ENCODE measurements at regions of chr2 and their contacts with region 1.

Region 1: DNA sequence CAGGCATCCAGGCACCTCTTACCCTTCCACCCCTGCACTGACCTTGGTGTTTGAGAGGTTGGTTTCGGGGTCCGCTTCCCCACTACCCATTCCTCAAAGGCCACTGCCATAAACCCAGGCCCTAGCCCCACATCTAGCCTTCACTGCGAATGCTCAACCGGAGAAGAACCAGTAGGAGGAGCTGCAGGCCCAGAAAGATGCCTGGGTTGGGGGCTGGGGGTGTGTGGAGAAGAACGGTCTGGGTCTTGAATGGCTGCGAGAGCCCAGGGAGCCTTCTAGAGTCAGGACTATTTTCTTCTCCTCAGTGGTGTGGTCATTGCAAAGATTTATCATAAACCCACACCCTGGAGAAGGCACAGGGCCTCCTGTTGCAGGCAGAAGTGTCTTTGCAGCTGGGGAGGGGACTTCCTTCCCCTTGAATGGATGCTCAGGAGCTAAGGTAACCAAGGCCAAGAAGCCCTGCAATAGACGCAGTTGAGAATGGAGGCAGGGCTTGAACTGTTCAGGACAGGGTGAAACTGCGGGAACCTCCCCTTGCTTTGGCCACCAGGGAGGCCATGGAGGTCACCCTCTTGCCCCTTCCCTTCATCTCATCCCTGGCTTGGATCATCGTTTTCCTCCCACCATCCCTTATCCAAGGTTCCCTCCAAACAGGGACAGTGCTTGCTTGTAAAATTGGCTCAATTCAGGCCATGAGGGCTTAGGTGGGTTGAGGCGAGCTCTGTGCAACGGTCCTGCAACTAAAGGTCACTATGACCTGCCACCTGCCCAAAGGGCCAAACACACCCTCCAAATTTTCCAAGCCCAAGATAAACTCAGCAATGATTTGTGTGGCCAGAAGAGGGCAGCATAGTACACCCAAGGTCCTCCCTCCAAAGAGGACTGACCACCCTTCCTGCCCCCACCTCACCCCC is 20.9 kb downstream of the THNSL2 start:
- DNase-seq: peak; percentile 71
- H3K4me3 Mint-ChIP-seq: no peak overlapping the region
- H3K27ac Mint-ChIP-seq: no peak overlapping the region
- H3K4me1 Mint-ChIP-seq: peaks cover 22% of the 10 kb centered on the region
- H3K27me3 Mint-ChIP-seq: peaks cover 5% of the 10 kb centered on the region

Region 2: GRCh38 chr2:88170472-88170892 is 20.6 kb before region 1 on chr2:
- intact Hi-C with region 1: no loop called
- DNase-seq: peak; percentile 53
- H3K4me3 Mint-ChIP-seq: peak overlapping the region; percentile 69
- H3K27ac Mint-ChIP-seq: no peak overlapping the region
- H3K4me1 Mint-ChIP-seq: peaks cover 4% of the 10 kb centered on the region
- H3K27me3 Mint-ChIP-seq: peaks cover 30% of the 10 kb centered on the region

Region 3: GRCh38 chr2:88307817-88308216 is 116.8 kb after region 1 on chr2:
- intact Hi-C with region 1: loop called (anchors 2 kb)
- DNase-seq: peak; percentile 66
- H3K4me3 Mint-ChIP-seq: no peak overlapping the region
- H3K27ac Mint-ChIP-seq: no peak overlapping the region
- H3K4me1 Mint-ChIP-seq: no peaks in the 10 kb centered on the region
- H3K27me3 Mint-ChIP-seq: peaks cover 4% of the 10 kb centered on the region

Measured in activated CD4-positive, alpha-beta T cell treated with anti-CD3 and anti-CD28 coated beads, Interleukin-2, amount 10 ng/mL, durations not matched to agents 24 days and 14 days (primary cell).